ENCODE measurements at regions of chr2 and their contacts with region 1.

Region 1: GRCh38 chr2:196182439-196183171 is 11.2 kb upstream of the STK17B start:
- DNase-seq: no peak
- ATAC-seq: peak; percentile 61
- H3K4me3 Mint-ChIP-seq: peak overlapping the region; percentile 76
- H3K27ac Mint-ChIP-seq: peak overlapping the region; percentile 93
- H3K4me1 Mint-ChIP-seq: peaks cover 76% of the 10 kb centered on the region
- H3K27me3 Mint-ChIP-seq: no peaks in the 10 kb centered on the region
- CTCF ChIP-seq: no peak

Region 2: GRCh38 chr2:196160101-196160500 is 22.5 kb before region 1 on chr2:
- CTCF ChIA-PET with region 1: interaction called, 4 read pairs
- POLR2A ChIA-PET with region 1: interaction called, 15 read pairs
- intact Hi-C with region 1: no loop called
- DNase-seq: peak; percentile 84
- ATAC-seq: peak; percentile 40
- H3K4me3 Mint-ChIP-seq: peak overlapping the region; percentile 99
- H3K27ac Mint-ChIP-seq: peak overlapping the region; percentile 83
- H3K4me1 Mint-ChIP-seq: peaks cover 49% of the 10 kb centered on the region
- H3K27me3 Mint-ChIP-seq: no peaks in the 10 kb centered on the region
- CTCF ChIP-seq: no peak

Region 3: DNA sequence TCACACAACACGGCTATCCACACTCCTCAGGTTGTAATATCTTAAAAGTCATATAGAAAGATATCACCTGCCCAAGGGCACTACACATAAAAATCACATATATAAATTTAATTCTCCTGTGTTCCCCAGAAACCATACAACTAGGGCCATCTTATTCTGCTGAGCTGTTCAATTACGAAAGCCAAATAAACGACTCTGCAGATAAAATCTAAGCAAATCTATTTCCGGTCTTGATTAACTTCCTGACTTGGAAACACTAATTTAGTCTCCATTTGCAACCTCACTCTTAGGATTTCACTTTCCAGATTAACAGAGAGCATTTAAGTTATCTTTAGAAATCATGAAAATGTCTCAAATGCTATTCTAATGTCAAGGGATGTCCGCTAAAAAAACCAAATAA is 12.7 kb after region 1 on chr2:
- CTCF ChIA-PET with region 1: interaction called, 7 read pairs
- POLR2A ChIA-PET with region 1: interaction called, 13 read pairs
- intact Hi-C with region 1: loop called (anchors 2 kb)
- DNase-seq: no peak
- ATAC-seq: no peak
- H3K4me3 Mint-ChIP-seq: no peak overlapping the region
- H3K27ac Mint-ChIP-seq: peak overlapping the region; percentile 50
- H3K4me1 Mint-ChIP-seq: peaks cover 53% of the 10 kb centered on the region
- H3K27me3 Mint-ChIP-seq: no peaks in the 10 kb centered on the region
- CTCF ChIP-seq: no peak

Region 4: GRCh38 chr2:196200557-196200956 is 18.0 kb after region 1 on chr2:
- CTCF ChIA-PET with region 1: interaction called, 7 read pairs
- POLR2A ChIA-PET with region 1: interaction called, 13 read pairs
- intact Hi-C with region 1: loop called (anchors 2 kb)
- DNase-seq: peak; percentile 68
- ATAC-seq: peak; percentile 91
- H3K4me3 Mint-ChIP-seq: peak overlapping the region; percentile 48
- H3K27ac Mint-ChIP-seq: peak overlapping the region; percentile 90
- H3K4me1 Mint-ChIP-seq: peaks cover 45% of the 10 kb centered on the region
- H3K27me3 Mint-ChIP-seq: no peaks in the 10 kb centered on the region
- CTCF ChIP-seq: no peak